ENCODE measurements at regions of chr7 and their contacts with region 1.

Region 1: DNA sequence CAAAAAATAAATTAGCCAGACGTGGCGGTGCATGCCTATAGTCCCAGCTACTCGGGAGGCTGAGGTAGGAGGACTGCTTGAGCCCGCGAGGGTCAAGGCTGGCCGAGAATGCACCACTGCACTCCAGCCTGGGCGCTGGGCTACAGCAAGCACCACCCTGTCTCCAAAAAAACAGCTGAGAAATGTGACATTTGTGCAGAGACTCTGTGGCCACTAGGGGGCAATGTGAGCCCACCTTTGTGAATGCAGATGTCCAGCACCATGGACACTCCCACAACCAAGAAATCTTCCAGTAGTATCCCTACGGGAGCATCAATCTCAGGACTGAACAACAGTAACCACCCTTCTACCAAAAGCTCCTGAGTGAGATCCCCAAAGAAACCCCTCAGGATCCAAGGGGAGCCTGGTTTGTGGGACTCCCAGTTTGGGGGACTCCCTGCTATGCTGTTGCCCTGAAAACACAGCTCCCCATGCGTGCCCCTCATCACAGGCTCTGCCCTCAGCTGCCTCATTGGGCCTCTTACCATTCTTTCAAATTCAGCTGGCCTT is 6.2 kb upstream of the AHCYL2 start:
- DNase-seq: peak; percentile 81 to 93
- ATAC-seq: peak; percentile 95 to 96
- H3K4me3 ChIP-seq: no peak overlapping the region
- H3K27ac ChIP-seq: no peak overlapping the region
- H3K4me1 ChIP-seq: 0 out of 3 replicates have a peak, but pooled peaks cover 3% of the 10 kb centered on the region
- CTCF ChIP-seq: peak; percentile 94
- EP300 ChIP-seq: no peak
- POLR2A ChIP-seq: no peak
- RAD21 ChIP-seq: peak; percentile 96 to 98

Region 2: GRCh38 chr7:129041142-129042085 is 177.2 kb before region 1 on chr7:
- CTCF ChIA-PET with region 1: no interaction called
- POLR2A ChIA-PET with region 1: no interaction called
- DNase-seq: no peak
- ATAC-seq: no peak
- H3K4me3 ChIP-seq: no peak overlapping the region
- H3K27ac ChIP-seq: no peak overlapping the region
- H3K4me1 ChIP-seq: no peaks in the 10 kb centered on the region
- CTCF ChIP-seq: no peak
- EP300 ChIP-seq: no peak
- POLR2A ChIP-seq: no peak
- RAD21 ChIP-seq: no peak

Region 3: GRCh38 chr7:129169171-129169671 is 49.4 kb before region 1 on chr7:
- CTCF ChIA-PET with region 1: interaction called, 88 read pairs
- POLR2A ChIA-PET with region 1: no interaction called
- DNase-seq: no peak
- ATAC-seq: 0 out of 6 replicates have a peak, but pooled peaks of 1 of the 2 experiments have one; percentile 23
- H3K4me3 ChIP-seq: no peak overlapping the region
- H3K27ac ChIP-seq: no peak overlapping the region
- H3K4me1 ChIP-seq: no peaks in the 10 kb centered on the region
- CTCF ChIP-seq: no peak
- EP300 ChIP-seq: no peak
- POLR2A ChIP-seq: no peak
- RAD21 ChIP-seq: no peak

Region 4: GRCh38 chr7:129252128-129252527 is 33.5 kb after region 1 on chr7:
- CTCF ChIA-PET with region 1: interaction called, 16 read pairs
- POLR2A ChIA-PET with region 1: no interaction called
- DNase-seq: no peak
- ATAC-seq: no peak
- H3K4me3 ChIP-seq: no peak overlapping the region
- H3K27ac ChIP-seq: no peak overlapping the region
- H3K4me1 ChIP-seq: no peaks in the 10 kb centered on the region
- CTCF ChIP-seq: no peak
- EP300 ChIP-seq: no peak
- POLR2A ChIP-seq: no peak
- RAD21 ChIP-seq: no peak

Region 5: DNA sequence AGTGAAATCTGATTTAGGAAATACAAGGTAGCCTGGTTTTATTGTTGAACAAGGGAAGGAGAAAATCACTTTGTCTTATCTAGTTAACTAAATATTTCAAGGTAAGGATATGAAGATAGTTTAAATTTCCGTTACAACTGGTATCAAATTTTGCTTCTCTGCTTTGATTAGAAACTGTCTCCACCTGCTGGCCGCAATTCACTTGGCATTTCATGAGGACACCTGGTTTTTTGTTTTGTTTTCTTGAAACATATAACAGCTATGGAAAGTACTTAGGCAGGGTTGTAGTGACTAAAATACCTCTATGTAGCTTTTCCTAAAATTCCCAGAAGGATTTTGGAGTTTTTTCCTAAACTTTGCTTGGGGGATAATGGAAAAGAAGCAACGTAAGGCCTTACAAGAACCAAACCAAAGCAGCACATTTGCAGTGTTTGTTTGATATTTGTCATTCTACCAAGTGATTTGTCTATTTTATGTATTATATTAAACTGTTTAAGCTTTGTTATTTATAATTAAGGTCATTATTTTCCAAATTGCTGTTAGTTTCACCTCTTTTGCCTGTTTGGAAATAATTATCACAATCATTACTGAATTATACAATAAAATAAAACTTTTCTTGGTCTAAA is 79.8 kb after region 1 on chr7:
- CTCF ChIA-PET with region 1: interaction called, 203 read pairs
- POLR2A ChIA-PET with region 1: no interaction called
- DNase-seq: peak; percentile 49 to 59
- ATAC-seq: peak; percentile 54 to 59; a peak in 3 of 6 replicates
- H3K4me3 ChIP-seq: no peak overlapping the region
- H3K27ac ChIP-seq: no peak overlapping the region
- H3K4me1 ChIP-seq: no peaks in the 10 kb centered on the region
- CTCF ChIP-seq: peak; percentile 91
- EP300 ChIP-seq: no peak
- POLR2A ChIP-seq: no peak
- RAD21 ChIP-seq: peak; percentile 74 to 78

Region 6: DNA sequence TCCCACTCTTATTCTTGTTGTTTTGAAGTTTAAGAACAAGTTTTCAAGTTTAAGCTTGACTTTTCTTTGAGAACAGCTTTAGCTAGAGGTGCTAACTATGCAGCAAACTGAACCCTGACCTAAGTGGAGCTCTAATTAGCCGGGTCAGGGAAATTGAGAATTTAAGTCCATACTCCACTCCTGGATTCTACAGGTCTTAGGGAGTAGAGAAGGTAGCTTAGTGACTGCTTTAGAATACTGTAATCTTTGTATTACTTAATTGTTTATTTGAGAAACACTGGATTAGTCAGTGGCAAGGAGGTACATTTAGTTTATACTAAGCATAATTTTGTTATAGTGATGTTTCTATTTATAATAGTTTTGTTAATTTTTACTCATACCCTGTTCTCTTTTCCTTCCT is 141.1 kb after region 1 on chr7:
- CTCF ChIA-PET with region 1: interaction called, 10 read pairs
- POLR2A ChIA-PET with region 1: no interaction called
- DNase-seq: no peak
- ATAC-seq: no peak
- H3K4me3 ChIP-seq: no peak overlapping the region
- H3K27ac ChIP-seq: no peak overlapping the region
- H3K4me1 ChIP-seq: no peaks in the 10 kb centered on the region
- CTCF ChIP-seq: no peak
- EP300 ChIP-seq: no peak
- POLR2A ChIP-seq: no peak
- RAD21 ChIP-seq: no peak

Region 7: DNA sequence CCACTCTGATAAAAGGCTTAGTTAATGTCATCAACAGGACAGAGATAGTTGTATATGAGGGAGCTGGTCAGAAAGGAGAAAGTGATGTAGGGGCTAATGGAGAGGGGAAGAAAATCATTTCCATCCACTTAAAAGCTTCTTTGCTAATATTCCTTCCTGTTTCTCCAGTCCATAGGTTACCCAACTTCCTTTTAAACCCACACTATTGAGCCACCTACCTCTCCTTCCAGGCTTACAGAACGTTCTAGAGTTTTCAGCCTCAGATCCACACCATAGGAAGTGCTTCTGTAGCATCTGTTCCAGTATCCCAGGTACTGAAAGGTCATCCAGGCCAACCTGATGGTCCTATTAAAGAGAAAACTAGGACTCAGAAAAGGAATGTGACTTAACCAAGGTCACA is 243.8 kb after region 1 on chr7:
- CTCF ChIA-PET with region 1: interaction called, 65 read pairs
- POLR2A ChIA-PET with region 1: no interaction called
- DNase-seq: no peak
- ATAC-seq: no peak
- H3K4me3 ChIP-seq: no peak overlapping the region
- H3K27ac ChIP-seq: no peak overlapping the region
- H3K4me1 ChIP-seq: no peaks in the 10 kb centered on the region
- CTCF ChIP-seq: no peak
- EP300 ChIP-seq: no peak
- POLR2A ChIP-seq: no peak
- RAD21 ChIP-seq: no peak

Region 8: DNA sequence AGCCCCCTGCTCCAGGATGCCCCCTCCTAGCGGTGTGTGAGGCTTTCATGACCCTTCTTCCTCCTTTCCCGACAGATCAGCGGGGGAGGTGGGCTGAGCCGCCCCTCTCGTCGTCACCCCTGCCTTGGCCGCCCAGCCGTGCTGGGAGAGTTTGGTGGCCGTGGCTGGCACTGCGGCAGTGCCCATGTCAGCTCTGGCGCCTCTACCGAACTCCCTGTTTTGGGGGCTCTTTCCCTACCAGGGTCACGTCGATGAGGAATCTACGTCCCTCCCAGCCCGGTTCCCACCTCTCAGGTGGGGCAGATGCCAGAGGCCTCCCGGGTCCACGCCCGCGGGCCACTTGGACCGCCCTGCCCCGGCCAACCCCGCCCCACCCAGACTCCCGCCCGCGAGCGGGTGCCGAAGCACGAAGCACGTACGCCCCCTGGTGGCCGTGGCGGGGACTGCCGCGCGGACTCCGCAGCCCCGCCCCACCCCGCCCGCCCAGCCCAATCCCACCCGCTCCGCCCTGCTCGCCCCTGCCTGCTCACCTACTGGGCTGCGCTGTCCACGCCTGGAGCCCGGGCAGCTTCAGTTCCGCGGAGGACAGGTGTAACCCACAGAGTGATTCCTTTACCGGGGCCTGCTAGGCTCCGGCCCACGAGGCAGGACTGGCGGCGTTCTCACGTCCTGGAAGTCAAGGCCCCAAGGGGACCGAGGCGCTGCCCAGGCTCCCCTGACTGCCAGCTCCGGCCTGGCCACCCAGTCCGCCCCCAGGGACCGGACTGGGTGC is 607.1 kb after region 1 on chr7:
- CTCF ChIA-PET with region 1: interaction called, 12 read pairs
- POLR2A ChIA-PET with region 1: no interaction called
- DNase-seq: peak; percentile 64 to 91
- ATAC-seq: peak; percentile 73 to 83
- H3K4me3 ChIP-seq: peak overlapping the region; percentile 67
- H3K27ac ChIP-seq: peak overlapping the region; percentile 96 to 98
- H3K4me1 ChIP-seq: peaks cover 34% of the 10 kb centered on the region
- CTCF ChIP-seq: peak; percentile 96
- EP300 ChIP-seq: peak in 1 of 2 experiments; percentile 14; a peak in 1 of 5 replicates
- POLR2A ChIP-seq: peak; percentile 54
- RAD21 ChIP-seq: peak; percentile 71 to 97

Region 9: DNA sequence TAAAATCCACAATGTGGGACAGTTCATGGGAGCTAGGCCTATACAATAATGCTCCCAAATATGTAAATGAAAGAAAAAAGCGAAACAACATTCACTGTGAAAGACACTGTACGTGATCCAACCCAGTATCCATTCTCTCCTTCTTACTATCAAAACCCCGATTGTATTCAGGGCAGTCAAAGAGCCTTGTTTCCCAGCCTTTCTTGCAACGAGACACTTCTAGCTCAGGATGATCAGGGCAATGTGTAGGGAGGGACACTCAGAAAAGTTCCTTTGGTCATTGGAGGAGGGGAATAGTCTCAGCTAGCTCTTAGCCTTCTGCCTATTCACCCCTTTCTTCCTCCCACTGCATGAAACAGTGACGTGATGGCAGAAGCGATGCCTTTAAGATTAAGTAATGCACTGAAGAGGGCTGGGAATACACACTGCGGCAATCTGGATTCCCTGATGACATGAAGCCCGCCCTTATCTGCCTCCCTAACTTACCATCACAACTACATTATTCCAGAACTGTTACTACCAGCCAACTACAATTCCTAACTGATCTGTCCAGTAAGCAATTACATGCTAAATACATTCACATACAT is 706.9 kb after region 1 on chr7:
- CTCF ChIA-PET with region 1: no interaction called
- POLR2A ChIA-PET with region 1: no interaction called
- DNase-seq: no peak
- ATAC-seq: peak in 1 of 2 experiments; percentile 13; a peak in 1 of 6 replicates
- H3K4me3 ChIP-seq: no peak overlapping the region
- H3K27ac ChIP-seq: 0 out of 6 replicates have a peak overlapping the region, but pooled peaks of 1 of the 2 experiments have one; percentile 32
- H3K4me1 ChIP-seq: peaks cover 20% of the 10 kb centered on the region
- CTCF ChIP-seq: no peak
- EP300 ChIP-seq: no peak
- POLR2A ChIP-seq: no peak
- RAD21 ChIP-seq: no peak

Measured in A549 (cell line).